ENCODE measurements at regions of chr10 and their contacts with region 1.

Region 1: GRCh38 chr10:77710759-77711682 is 73.4 kb upstream of the KCNMA1 start:
- DNase-seq: peak; percentile 73
- H3K4me3 Mint-ChIP-seq: peak overlapping the region; percentile 49
- H3K27ac Mint-ChIP-seq: no peak overlapping the region
- H3K4me1 Mint-ChIP-seq: peaks cover 6% of the 10 kb centered on the region
- H3K27me3 Mint-ChIP-seq: peaks cover 25% of the 10 kb centered on the region

Region 2: GRCh38 chr10:77165445-77166208 is 545.4 kb before region 1 on chr10:
- CTCF ChIA-PET with region 1: interaction called, 9 read pairs
- intact Hi-C with region 1: loop called (anchors 1 kb)
- DNase-seq: peak; percentile 60
- H3K4me3 Mint-ChIP-seq: peak overlapping the region; percentile 34
- H3K27ac Mint-ChIP-seq: no peak overlapping the region
- H3K4me1 Mint-ChIP-seq: peaks cover 3% of the 10 kb centered on the region
- H3K27me3 Mint-ChIP-seq: peaks cover 31% of the 10 kb centered on the region

Region 3: DNA sequence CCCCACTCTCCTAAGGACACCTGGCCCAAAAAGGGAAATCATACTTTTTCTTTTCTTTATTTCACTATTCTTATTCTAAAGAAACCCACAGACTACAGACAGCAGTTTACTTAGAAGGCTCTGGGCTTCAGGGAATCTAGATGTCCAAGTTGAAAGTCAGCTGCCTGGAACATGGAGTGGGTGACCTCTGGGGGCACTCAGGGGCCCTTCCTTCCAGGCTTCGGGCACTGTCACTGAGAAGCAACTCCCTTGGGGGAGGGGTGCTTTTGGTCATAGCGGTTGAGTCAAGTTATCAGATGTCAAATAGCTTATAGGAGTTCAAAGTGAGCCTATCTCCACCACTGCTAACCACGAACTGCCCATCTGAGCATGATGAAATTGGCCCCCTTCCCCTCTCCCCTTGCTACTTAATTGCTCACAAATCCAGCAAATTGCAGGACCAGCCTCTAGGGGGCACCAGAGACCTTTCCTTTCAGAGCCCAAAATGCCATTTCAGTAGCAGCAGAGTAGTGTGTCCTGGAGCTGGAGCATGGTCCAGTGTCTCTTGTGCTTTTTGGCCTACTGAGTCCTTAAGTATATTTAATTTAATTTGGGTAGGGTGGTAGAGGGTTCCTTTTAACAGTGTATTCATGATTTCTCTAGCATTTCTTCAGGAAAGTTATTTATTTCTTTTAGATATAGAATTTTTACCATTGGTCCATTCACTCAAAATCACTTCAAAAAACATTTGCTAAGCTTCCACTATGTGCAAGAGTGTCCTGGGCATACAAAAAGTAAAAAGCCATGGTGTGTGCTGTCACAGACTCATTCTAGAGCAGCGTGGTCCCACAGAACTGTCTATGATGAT is 537.2 kb before region 1 on chr10:
- CTCF ChIA-PET with region 1: interaction called, 18 read pairs
- intact Hi-C with region 1: loop called (anchors 1 kb)
- DNase-seq: peak; percentile 82
- H3K4me3 Mint-ChIP-seq: no peak overlapping the region
- H3K27ac Mint-ChIP-seq: no peak overlapping the region
- H3K4me1 Mint-ChIP-seq: no peaks in the 10 kb centered on the region
- H3K27me3 Mint-ChIP-seq: peaks cover 16% of the 10 kb centered on the region

Region 4: GRCh38 chr10:77251297-77252013 is 459.6 kb before region 1 on chr10:
- CTCF ChIA-PET with region 1: interaction called, 3 read pairs
- intact Hi-C with region 1: loop called (anchors 10 kb)
- DNase-seq: peak; percentile 9
- H3K4me3 Mint-ChIP-seq: no peak overlapping the region
- H3K27ac Mint-ChIP-seq: no peak overlapping the region
- H3K4me1 Mint-ChIP-seq: no peaks in the 10 kb centered on the region
- H3K27me3 Mint-ChIP-seq: peaks cover 2% of the 10 kb centered on the region

Region 5: DNA sequence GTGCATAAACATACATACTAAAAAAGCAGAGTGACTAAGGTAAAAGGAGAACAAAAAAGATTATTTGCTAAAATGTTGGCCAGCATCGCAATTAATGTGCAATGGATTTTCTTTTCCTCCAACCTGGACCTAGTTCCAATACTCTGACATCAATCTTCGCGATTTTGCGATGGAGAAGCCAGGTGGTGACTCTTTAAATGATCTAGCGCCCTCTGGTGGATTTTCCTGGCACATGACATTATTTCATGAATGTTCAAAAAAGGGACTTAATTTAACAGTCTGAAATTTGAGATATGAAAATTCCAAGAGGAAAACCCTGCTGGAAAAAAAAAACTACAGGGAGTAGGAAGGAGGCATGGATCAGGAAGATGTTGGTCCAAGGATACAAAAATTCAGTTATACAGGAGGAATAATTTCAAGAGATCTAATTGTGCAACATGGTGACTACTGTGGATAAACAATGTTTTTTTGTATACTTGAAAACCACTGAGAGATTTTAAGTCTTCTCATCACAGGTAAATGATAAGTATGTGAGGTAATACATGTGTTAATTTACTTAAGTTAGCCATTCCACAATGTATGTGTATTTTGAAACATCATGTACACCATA is 69.1 kb before region 1 on chr10:
- CTCF ChIA-PET with region 1: interaction called, 9 read pairs
- intact Hi-C with region 1: loop called (anchors 5 kb)
- DNase-seq: peak; percentile 72
- H3K4me3 Mint-ChIP-seq: no peak overlapping the region
- H3K27ac Mint-ChIP-seq: no peak overlapping the region
- H3K4me1 Mint-ChIP-seq: peaks cover 3% of the 10 kb centered on the region
- H3K27me3 Mint-ChIP-seq: peaks cover 39% of the 10 kb centered on the region

Region 6: DNA sequence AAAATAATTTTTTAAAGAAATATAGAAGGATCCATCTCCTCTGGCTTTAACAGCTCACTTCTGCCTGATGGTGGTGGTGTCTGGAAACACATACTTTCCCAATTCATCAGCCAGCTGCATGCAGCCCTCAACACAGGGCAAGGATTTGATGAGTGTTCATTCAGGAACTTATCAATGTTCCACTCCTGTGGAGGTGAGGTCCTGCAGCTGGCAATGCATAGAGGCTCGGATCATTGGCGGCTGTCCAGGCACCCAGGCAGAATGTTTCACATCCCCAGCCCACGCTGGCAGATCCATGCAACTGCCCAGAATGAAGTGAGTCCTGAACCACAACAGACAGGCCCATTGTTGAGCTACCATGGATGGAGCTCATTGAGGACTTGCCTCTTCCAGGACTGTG is 18.2 kb before region 1 on chr10:
- CTCF ChIA-PET with region 1: interaction called, 30 read pairs
- intact Hi-C with region 1: loop called (anchors 2 kb)
- DNase-seq: no peak
- H3K4me3 Mint-ChIP-seq: no peak overlapping the region
- H3K27ac Mint-ChIP-seq: no peak overlapping the region
- H3K4me1 Mint-ChIP-seq: no peaks in the 10 kb centered on the region
- H3K27me3 Mint-ChIP-seq: peaks cover 12% of the 10 kb centered on the region

Region 7: DNA sequence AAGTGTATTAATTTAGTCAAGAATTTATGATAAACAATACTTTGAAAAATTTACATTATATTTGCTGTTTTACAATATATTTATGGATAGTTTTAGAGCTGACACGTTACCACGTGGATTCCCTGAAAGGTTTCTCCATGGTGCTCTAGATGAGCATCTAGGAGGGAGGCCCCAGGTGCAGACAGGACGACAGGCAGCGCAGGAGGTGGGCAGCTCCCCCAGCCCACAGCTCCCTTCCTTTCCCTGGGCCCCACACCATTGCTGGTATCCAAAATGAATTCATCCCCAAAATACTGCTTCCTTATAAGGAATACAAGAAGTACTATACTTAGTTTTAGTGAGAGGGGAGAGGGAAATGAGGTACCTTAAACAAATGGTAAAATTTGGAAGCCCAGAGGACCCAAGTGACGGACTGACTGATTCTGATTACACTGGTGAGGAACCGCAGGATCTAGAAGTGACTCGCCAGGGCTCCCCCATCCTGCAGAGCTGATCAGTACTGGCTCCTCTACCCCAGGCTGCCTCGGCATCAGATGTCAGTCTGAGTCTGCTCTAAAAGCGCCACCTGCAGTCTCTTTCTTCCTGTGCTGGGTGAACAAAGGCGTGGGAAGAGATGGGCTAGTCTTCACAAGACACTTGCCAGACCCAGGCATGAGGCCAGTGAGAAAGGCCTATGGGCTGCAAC is 126.4 kb after region 1 on chr10:
- CTCF ChIA-PET with region 1: interaction called, 5 read pairs
- intact Hi-C with region 1: loop called (anchors 1 kb)
- DNase-seq: peak; percentile 86
- H3K4me3 Mint-ChIP-seq: no peak overlapping the region
- H3K27ac Mint-ChIP-seq: no peak overlapping the region
- H3K4me1 Mint-ChIP-seq: peaks cover 4% of the 10 kb centered on the region
- H3K27me3 Mint-ChIP-seq: no peaks in the 10 kb centered on the region